A549 (cell line): ENCODE measurements at regions of chr6 and their contacts with region 1.

Region 1: DNA sequence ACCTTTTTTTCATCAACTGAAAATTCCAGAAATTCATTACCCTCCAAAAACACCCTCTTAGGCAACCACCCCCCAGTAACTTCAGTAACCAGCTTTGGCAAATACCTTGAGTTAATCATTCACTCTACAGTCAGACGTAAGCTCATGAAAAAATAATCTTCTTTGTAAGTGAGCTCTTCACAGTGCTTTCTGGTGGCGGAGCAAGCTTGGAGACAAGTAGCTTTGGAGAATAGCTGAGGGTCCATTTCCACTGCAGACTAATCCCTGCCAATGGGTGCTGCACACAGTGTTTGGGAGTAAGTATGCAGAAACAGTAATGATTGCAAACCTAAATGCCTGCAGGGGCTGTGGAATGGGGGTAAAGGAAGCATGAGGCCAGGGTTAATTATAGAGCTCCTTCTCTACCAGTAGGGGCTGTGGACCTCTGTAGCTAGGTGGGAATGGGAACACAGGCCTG is 56.8 kb upstream of the HINT3 start:
- DNase-seq: peak; percentile 72 to 86
- ATAC-seq: peak; percentile 94 to 97
- H3K4me3 ChIP-seq: peak overlapping the region; percentile 43
- H3K27ac ChIP-seq: peak overlapping the region; percentile 96 to 97
- H3K4me1 ChIP-seq: peaks cover 78% of the 10 kb centered on the region
- CTCF ChIP-seq: peak; percentile 17; the same call in 2 of the 3 replicates
- EP300 ChIP-seq: peak in 1 of 2 experiments; percentile 60; a peak in 3 of 5 replicates
- POLR2A ChIP-seq: no peak
- RAD21 ChIP-seq: no peak; a peak in 1 of 5 replicates

Region 2: GRCh38 chr6:125858427-125859320 is 41.1 kb before region 1 on chr6:
- CTCF ChIA-PET with region 1: interaction called, 16 read pairs
- POLR2A ChIA-PET with region 1: no interaction called
- DNase-seq: peak; percentile 83 to 85
- ATAC-seq: peak; percentile 100
- H3K4me3 ChIP-seq: no peak overlapping the region
- H3K27ac ChIP-seq: peak overlapping the region; percentile 44 to 68; a peak in 4 of 6 replicates
- H3K4me1 ChIP-seq: peaks cover 18% of the 10 kb centered on the region
- CTCF ChIP-seq: peak; percentile 74
- EP300 ChIP-seq: no peak
- POLR2A ChIP-seq: no peak
- RAD21 ChIP-seq: peak; percentile 83 to 95

Region 3: DNA sequence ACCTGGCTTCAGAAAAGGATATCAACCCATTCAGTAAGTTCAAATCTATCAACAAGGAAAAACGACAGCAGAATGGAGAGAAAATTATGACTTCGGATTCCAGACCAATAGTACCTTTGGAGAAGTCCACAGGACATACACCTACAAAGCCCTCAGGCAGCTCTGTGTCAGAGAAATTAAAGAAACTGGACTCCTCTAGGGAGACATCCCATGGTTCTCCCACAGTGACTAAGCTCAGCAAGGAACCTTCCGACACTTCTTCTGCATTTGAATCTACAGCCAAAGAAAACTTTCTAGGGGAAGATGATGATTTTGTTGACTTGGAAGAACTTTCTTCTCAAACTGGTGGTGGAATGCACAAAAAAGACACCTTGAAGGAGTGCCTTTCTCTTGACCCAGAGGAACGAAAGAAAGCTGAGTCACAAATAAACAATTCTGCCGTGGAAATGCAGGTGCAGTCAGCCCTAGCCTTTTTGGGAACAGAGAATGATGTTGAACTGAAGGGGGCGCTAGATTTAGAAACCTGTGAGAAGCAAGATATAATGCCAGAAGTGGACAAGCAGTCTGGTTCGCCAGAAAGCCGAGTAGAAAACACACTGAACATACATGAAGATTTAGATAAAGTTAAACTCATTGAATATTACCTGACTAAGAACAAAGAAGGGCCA is 10.6 kb before region 1 on chr6:
- CTCF ChIA-PET with region 1: interaction called, 13 read pairs
- POLR2A ChIA-PET with region 1: no interaction called
- DNase-seq: peak in 1 of 2 experiments; percentile 61
- ATAC-seq: peak in 1 of 2 experiments; percentile 75; a peak in 3 of 6 replicates
- H3K4me3 ChIP-seq: no peak overlapping the region
- H3K27ac ChIP-seq: peak overlapping the region in 1 of 2 experiments; percentile 40; a peak in 2 of 6 replicates
- H3K4me1 ChIP-seq: peaks cover 18% of the 10 kb centered on the region
- CTCF ChIP-seq: peak; percentile 47
- EP300 ChIP-seq: no peak
- POLR2A ChIP-seq: no peak
- RAD21 ChIP-seq: peak; percentile 14 to 20; a peak in 1 of 5 replicates

Region 4: GRCh38 chr6:125913864-125914351 is 14.2 kb after region 1 on chr6:
- CTCF ChIA-PET with region 1: interaction called, 13 read pairs
- POLR2A ChIA-PET with region 1: interaction called, 4 read pairs
- DNase-seq: peak; percentile 32 to 93
- ATAC-seq: peak; percentile 76 to 77
- H3K4me3 ChIP-seq: peak overlapping the region; percentile 19; the same call in 1 of the 3 replicates
- H3K27ac ChIP-seq: peak overlapping the region; percentile 70 to 74
- H3K4me1 ChIP-seq: peaks cover 80% of the 10 kb centered on the region
- CTCF ChIP-seq: no peak
- EP300 ChIP-seq: peak in 1 of 2 experiments; percentile 77; a peak in 3 of 5 replicates
- POLR2A ChIP-seq: no peak
- RAD21 ChIP-seq: no peak